ENCODE measurements at regions of chr11 and their contacts with region 1.

Region 1: DNA sequence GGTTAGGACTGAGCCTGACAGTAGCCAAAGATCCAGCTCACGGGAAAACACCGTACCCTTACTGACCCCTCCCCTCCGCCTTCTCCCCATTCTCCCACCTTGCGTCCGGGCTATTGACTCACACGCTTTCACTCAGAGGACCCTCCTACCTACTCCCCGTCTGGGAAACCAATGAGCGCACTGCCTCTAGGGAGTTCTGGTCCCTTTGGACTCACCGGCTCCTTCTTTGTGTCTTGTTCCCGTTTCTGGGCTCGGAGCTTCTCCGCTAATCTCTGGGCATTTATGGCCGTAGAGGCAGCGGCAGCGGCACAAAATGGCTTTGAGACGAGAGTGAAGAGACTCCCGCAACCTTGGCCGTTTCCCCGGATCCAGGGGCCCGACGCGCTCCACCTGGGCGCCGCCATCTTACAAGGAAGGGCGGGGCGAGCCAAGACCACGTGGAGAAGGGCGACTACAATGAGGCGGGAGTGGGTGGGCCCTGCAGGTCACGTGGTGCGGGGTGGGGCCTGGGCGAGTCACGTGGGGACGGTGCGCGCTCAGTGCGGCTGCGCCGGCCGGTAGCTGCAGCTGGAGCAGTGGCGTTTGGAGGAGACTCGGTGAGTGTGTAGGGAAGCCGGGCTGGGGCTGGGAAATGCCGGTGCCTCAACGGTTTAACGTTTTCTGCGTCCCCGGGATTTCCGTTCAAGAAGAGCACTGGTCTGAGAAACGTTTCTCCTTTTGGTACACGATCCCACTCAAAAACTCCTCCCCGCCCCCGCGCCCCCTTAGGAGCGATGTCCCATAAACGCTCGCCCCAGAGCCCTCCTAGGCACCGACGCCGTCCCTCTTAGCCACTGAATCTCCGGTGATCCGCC is at the starts of genes FAM118B and RPUSD4:
- DNase-seq: peak; percentile 99
- H3K4me3 Mint-ChIP-seq: peak within 1 kb of the TSS; percentile 94
- H3K27ac Mint-ChIP-seq: peak within 1 kb of the TSS; percentile 86
- H3K4me1 Mint-ChIP-seq: peaks cover 32% of the 10 kb centered on the region
- H3K27me3 Mint-ChIP-seq: no peaks in the 10 kb centered on the region
- total RNA-seq, gene FAM118B: 5.6 to 6.3 TPM
- total RNA-seq, gene RPUSD4: 33.0 to 34.7 TPM

Region 2: DNA sequence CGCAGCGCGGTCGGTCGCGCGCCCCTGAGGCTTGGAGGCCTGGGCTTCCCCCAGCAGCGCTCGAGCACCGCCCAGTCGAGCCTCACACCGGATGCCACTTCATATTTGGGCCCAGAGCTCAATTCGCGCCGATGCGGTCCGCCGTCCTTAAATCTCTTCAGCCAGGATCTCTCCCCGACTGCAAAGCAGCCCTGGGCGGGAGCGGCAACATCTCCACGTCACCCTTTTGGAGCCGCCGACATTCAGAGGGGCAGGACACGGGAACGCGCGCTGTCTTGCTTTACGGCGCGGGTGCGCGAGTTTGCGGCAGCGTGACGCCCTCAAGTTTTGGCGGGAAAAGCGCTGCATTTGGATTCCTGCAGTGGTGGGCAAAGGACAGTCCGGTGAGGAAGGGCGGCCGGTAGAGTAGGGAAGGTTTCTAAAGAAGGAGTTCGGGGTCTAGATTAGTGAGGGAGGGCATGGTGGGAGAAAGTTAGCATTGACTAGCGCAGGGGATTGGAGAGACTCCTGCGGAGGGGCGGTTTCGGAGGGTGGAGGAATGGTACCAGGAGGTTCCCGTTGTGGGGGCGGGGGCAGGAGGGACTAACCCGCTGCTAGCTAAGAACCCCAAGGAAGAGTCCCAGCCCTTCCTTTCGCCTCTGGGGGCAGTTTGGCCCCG is 585.7 kb before region 1 on chr11:
- CTCF ChIA-PET with region 1: no interaction called
- intact Hi-C with region 1: loop called (anchors 10 kb)
- DNase-seq: peak; percentile 90
- H3K4me3 Mint-ChIP-seq: peak overlapping the region; percentile 89
- H3K27ac Mint-ChIP-seq: peak overlapping the region; percentile 99
- H3K4me1 Mint-ChIP-seq: peaks cover 21% of the 10 kb centered on the region
- H3K27me3 Mint-ChIP-seq: no peaks in the 10 kb centered on the region

Region 3: DNA sequence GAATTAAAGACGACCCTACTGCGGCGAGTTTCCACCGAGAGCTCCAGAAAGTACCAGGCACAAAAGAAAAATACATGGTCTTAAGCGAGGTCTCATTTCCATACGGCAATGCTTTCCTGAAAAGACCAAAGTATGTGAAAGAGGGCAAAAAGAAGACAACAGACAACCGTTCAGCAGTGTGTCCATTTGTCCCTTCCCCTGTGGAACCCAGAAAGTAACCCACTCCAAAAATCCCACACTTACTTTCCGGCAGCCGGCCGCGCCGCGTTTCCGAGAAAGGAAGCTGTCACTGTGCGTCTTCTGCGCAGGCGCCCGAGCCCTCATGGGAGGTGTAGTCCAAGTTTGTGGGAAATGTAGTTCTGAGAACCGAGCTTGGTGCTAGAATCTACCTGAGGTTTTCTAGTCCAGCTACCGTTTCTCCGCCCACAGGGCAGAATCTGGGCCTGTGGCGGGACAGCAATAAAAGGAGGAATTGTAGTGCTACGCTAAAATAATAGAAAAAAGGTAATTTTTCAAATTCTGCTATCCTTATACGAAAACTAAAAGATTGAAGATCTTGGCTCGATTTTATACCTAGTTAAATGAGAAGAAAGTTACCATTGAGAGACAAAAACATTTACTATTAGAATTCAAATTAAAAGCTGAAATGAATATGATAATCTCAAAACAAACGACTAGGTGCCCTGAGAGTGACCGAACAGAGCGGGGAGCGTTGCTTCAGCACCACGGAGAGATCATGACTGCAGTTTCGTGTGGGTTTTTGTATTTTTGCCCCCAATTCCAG is 308.3 kb before region 1 on chr11 and contains the start of gene PUS3:
- CTCF ChIA-PET with region 1: no interaction called
- intact Hi-C with region 1: loop called (anchors 1 kb)
- DNase-seq: peak; percentile 93
- H3K4me3 Mint-ChIP-seq: peak within 1 kb of the TSS; percentile 94
- H3K27ac Mint-ChIP-seq: peak within 1 kb of the TSS; percentile 95
- H3K4me1 Mint-ChIP-seq: peaks cover 37% of the 10 kb centered on the region
- H3K27me3 Mint-ChIP-seq: peaks cover 22% of the 10 kb centered on the region
- total RNA-seq, gene PUS3: 14.9 to 18.5 TPM

Region 4: GRCh38 chr11:126268708-126269579 is 57.5 kb after region 1 on chr11 and contains the starts of genes FOXRED1 and SRPRA:
- CTCF ChIA-PET with region 1: no interaction called
- intact Hi-C with region 1: loop called (anchors 1 kb)
- DNase-seq: peak; percentile 100
- H3K4me3 Mint-ChIP-seq: peak within 1 kb of the TSS; percentile 93
- H3K27ac Mint-ChIP-seq: peak within 1 kb of the TSS; percentile 95
- H3K4me1 Mint-ChIP-seq: peaks cover 33% of the 10 kb centered on the region
- H3K27me3 Mint-ChIP-seq: no peaks in the 10 kb centered on the region
- total RNA-seq, gene FOXRED1: 41.2 to 48.6 TPM
- total RNA-seq, gene SRPRA: 137 to 142 TPM

Region 5: DNA sequence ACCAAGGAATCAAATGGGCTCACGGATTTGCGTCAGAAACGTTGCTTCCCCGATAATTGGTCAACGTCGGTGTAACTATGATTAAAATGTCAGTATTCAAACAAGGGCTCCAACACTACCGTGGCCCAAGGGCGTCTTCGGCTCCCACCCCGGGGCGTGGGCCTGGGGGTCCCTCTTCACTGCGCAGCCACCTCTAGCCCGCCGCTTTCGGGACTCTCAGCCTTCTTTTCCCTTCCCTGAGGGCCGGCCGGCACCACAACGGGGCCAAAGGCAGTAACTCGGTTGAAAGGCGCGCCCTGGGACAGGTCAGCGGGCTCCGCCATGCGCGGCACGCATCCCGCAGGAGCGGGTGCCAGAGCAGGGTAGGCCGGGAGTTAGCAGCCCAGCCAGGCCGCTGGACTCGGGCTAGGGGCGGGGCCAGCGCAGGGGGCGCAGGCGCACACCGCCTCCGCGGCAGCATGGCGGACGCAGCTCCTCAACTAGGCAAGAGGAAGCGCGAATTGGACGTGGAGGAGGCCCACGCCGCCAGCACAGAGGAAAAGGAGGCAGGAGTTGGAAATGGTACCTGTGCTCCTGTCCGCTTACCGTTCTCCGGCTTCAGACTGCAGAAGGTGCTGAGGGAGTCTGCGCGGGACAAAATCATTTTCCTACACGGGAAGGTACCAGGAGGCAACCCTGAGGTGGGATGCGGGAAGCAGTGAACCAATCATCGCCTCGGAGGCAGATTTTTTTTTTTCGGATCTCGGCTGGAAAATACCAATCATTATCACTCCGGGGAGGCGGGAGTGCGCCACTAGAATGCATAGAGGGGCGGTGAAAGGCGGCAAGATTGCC is 92.4 kb after region 1 on chr11 and contains the start of gene DCPS:
- CTCF ChIA-PET with region 1: no interaction called
- intact Hi-C with region 1: loop called (anchors 1 kb)
- DNase-seq: peak; percentile 86
- H3K4me3 Mint-ChIP-seq: peak within 1 kb of the TSS; percentile 95
- H3K27ac Mint-ChIP-seq: peak within 1 kb of the TSS; percentile 97
- H3K4me1 Mint-ChIP-seq: peaks cover 35% of the 10 kb centered on the region
- H3K27me3 Mint-ChIP-seq: no peaks in the 10 kb centered on the region
- total RNA-seq, gene DCPS: 34.9 to 39.5 TPM

Region 6: GRCh38 chr11:126416542-126417090 is 205.2 kb after region 1 on chr11:
- CTCF ChIA-PET with region 1: no interaction called
- intact Hi-C with region 1: loop called (anchors 1 kb)
- DNase-seq: peak; percentile 83
- H3K4me3 Mint-ChIP-seq: peak overlapping the region; percentile 56
- H3K27ac Mint-ChIP-seq: no peak overlapping the region
- H3K4me1 Mint-ChIP-seq: peaks cover 14% of the 10 kb centered on the region
- H3K27me3 Mint-ChIP-seq: no peaks in the 10 kb centered on the region

Measured in activated naive CD4-positive, alpha-beta T cell treated with anti-CD3 and anti-CD28 coated beads for 36 hours (primary cell).